Common myeloid progenitor, CD34-positive (primary cell): ENCODE measurements at regions of chr2 and their contacts with region 1.

Region 1: GRCh38 chr2:241315093-241315878 is at the start of gene HDLBP:
- DNase-seq: peak; percentile 99 to 100 (median 99)
- H3K4me3 ChIP-seq: peak within 1 kb of the TSS; percentile 88 to 99 (median 92)
- H3K27ac ChIP-seq: peak within 1 kb of the TSS; percentile 98
- H3K4me1 ChIP-seq: peaks cover 25 to 62% (median 38%) of the 10 kb centered on the region in 4 experiments
- H3K27me3 ChIP-seq: no peaks in the 10 kb centered on the region

Region 2: GRCh38 chr2:241302759-241303651 is 12.3 kb before region 1 on chr2:
- CTCF ChIA-PET with region 1: interaction called, 18 read pairs
- POLR2A ChIA-PET with region 1: interaction called, 3 read pairs
- DNase-seq: peak in 2 of 3 donors; percentile 37 to 66
- H3K4me3 ChIP-seq: no peak overlapping the region
- H3K27ac ChIP-seq: no peak overlapping the region
- H3K4me1 ChIP-seq: peaks cover 0 to 17% (median 8%) of the 10 kb centered on the region in 4 experiments
- H3K27me3 ChIP-seq: no peaks in the 10 kb centered on the region

Region 3: GRCh38 chr2:241351640-241352031 is 36.4 kb after region 1 on chr2:
- CTCF ChIA-PET with region 1: no interaction called
- POLR2A ChIA-PET with region 1: no interaction called
- DNase-seq: no peak
- H3K4me3 ChIP-seq: no peak overlapping the region
- H3K27ac ChIP-seq: no peak overlapping the region
- H3K4me1 ChIP-seq: peaks cover 0 to 9% (median 3%) of the 10 kb centered on the region in 4 experiments
- H3K27me3 ChIP-seq: no peaks in the 10 kb centered on the region